Calu3 (cell line): ENCODE measurements at regions of chr9 and their contacts with region 1.

Region 1: GRCh38 chr9:21326526-21327139 is 8.6 kb downstream of the KLHL9 start:
- DNase-seq: no peak
- H3K4me3 Mint-ChIP-seq: no peak overlapping the region
- H3K27ac Mint-ChIP-seq: no peak overlapping the region
- H3K4me1 Mint-ChIP-seq: peaks cover 5% of the 10 kb centered on the region
- H3K27me3 Mint-ChIP-seq: no peaks in the 10 kb centered on the region
- CTCF ChIP-seq: no peak

Region 2: DNA sequence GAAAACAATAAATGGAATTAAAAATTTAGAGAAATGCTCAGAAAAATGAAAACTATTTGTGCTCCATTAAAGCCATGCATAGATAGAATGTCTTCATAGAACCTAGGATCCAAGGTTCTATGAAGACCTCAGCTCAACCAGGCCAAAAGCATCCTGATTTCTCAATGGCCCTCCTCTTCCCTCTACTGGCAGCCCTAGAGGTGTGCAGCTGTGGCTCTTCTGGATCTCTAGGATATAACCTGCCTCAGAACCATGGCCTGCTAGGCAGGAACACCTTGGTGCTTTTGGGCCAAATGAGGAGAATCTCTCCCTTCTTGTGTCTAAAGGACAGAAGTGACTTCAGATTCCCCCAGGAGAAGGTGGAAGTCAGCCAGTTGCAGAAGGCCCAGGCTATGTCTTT is 128.7 kb after region 1 on chr9:
- CTCF ChIA-PET with region 1: interaction called, 10 read pairs
- intact Hi-C with region 1: loop called (anchors 5 kb)
- DNase-seq: peak; percentile 16
- H3K4me3 Mint-ChIP-seq: no peak overlapping the region
- H3K27ac Mint-ChIP-seq: no peak overlapping the region
- H3K4me1 Mint-ChIP-seq: no peaks in the 10 kb centered on the region
- H3K27me3 Mint-ChIP-seq: no peaks in the 10 kb centered on the region
- CTCF ChIP-seq: peak; percentile 25

Region 3: GRCh38 chr9:22009563-22009867 is 682.9 kb after region 1 on chr9:
- CTCF ChIA-PET with region 1: no interaction called
- intact Hi-C with region 1: no loop called
- DNase-seq: no peak
- H3K4me3 Mint-ChIP-seq: peak overlapping the region; percentile 96
- H3K27ac Mint-ChIP-seq: peak overlapping the region; percentile 53
- H3K4me1 Mint-ChIP-seq: peaks cover 10% of the 10 kb centered on the region
- H3K27me3 Mint-ChIP-seq: no peaks in the 10 kb centered on the region
- CTCF ChIP-seq: no peak